ENCODE measurements at regions of chr5 and their contacts with region 1.

Region 1: GRCh38 chr5:102681407-102681983 is 73.6 kb upstream of the PAM start:
- DNase-seq: no peak
- H3K4me3 ChIP-seq: no peak overlapping the region
- H3K27me3 ChIP-seq: no peaks in the 10 kb centered on the region
- CTCF ChIP-seq: peak; percentile 93

Region 2: DNA sequence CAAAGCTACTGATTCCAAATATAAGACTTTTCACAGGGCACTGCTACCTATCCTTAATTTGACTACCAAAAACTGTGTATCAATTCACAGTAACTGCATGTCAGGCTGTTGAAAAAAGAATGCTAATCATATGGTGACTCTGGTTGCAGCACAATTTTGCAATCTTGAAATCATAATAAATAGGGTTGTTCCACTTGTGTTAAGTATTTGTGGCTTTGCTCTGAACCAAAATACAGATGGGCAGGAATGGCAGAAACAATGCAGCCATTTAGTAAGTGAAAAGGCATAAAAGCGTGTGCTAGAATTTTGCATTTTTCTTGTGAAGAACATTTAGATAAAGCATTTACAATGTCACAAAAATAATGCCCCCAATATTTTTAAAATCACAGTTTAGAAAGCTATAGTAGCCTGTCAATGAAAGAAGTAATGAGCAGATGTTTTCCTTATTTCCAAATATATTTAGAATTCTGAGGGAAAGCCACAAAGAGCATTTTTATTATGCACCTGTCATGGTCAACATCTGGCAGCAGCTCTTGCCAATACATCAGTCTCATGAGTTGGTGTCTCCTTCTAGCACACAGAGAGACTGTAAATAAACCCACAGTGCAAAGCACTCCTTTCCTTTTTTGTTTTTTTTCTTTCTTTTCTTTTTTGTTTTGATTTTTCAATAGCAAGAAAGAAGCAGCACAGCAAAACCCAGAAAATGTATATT is 18.8 kb after region 1 on chr5:
- CTCF ChIA-PET with region 1: interaction called, 23 read pairs
- POLR2A ChIA-PET with region 1: no interaction called
- DNase-seq: no peak
- H3K4me3 ChIP-seq: no peak overlapping the region
- H3K27me3 ChIP-seq: no peaks in the 10 kb centered on the region
- CTCF ChIP-seq: no peak

Region 3: GRCh38 chr5:102778478-102778877 is 97.0 kb after region 1 on chr5:
- CTCF ChIA-PET with region 1: interaction called, 12 read pairs
- POLR2A ChIA-PET with region 1: no interaction called
- DNase-seq: peak; percentile 74
- H3K4me3 ChIP-seq: no peak overlapping the region
- H3K27me3 ChIP-seq: no peaks in the 10 kb centered on the region
- CTCF ChIP-seq: no peak

Region 4: GRCh38 chr5:102971697-102972293 is 290.3 kb after region 1 on chr5:
- CTCF ChIA-PET with region 1: interaction called, 16 read pairs
- POLR2A ChIA-PET with region 1: no interaction called
- DNase-seq: peak; percentile 4
- H3K4me3 ChIP-seq: no peak overlapping the region
- H3K27me3 ChIP-seq: no peaks in the 10 kb centered on the region
- CTCF ChIP-seq: peak; percentile 63

Region 5: GRCh38 chr5:103031607-103032006 is 350.1 kb after region 1 on chr5:
- CTCF ChIA-PET with region 1: interaction called, 10 read pairs
- POLR2A ChIA-PET with region 1: no interaction called
- DNase-seq: no peak
- H3K4me3 ChIP-seq: no peak overlapping the region
- H3K27me3 ChIP-seq: no peaks in the 10 kb centered on the region
- CTCF ChIP-seq: peak; percentile 51

Region 6: GRCh38 chr5:103120607-103121200 is 439.2 kb after region 1 on chr5:
- CTCF ChIA-PET with region 1: no interaction called
- POLR2A ChIA-PET with region 1: no interaction called
- DNase-seq: no peak
- H3K4me3 ChIP-seq: peak overlapping the region; percentile 85
- H3K27me3 ChIP-seq: no peaks in the 10 kb centered on the region
- CTCF ChIP-seq: no peak

Measured in BJ (cell line).